ENCODE measurements at regions of chr3 and their contacts with region 1.

Region 1: GRCh38 chr3:52770496-52771333 is at the start of gene NEK4:
- DNase-seq: peak; percentile 72 to 94
- H3K4me3 ChIP-seq: peak within 1 kb of the TSS; percentile 70 to 88 (median 78)
- H3K27ac ChIP-seq: peak within 1 kb of the TSS; percentile 86
- H3K4me1 ChIP-seq: peaks cover 0 to 2% (median 0%) of the 10 kb centered on the region in 4 experiments; a peak in 1 of 7 replicates
- H3K27me3 ChIP-seq: no peaks in the 10 kb centered on the region
- CTCF ChIP-seq: no peak
- EP300 ChIP-seq: no peak
- POLR2A ChIP-seq: peak; percentile 82 to 94
- RAD21 ChIP-seq: no peak
- total RNA-seq, gene NEK4: 39.5 and 40.0 TPM in 2 replicates

Region 2: DNA sequence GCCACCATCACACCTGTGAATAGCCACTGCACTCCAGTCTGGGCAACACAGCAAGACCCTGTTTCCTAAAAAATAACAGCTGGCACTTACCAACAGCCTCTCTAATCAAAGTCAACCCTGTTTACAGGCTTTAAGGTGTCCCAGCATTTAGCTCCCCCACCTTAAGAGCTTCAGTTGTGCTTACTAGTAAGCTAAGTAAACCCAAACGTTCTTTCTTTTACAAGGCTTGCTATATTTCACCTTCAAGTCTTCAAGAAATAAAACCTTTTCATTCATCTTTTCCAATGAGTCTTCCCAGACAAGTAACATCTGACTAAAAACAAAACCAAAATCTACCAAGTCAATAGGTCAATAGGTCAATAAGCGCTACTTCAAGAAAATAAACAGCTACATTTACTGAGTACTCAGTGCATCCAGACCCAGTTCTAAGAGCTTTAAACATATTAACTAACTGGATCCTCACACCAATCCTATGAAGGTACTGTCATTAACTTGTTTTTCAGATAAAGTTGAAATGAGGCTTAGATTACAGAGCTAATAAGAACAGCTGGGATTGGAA is 147.4 kb before region 1 on chr3:
- CTCF ChIA-PET with region 1: no interaction called
- POLR2A ChIA-PET with region 1: no interaction called
- DNase-seq: no peak
- H3K4me3 ChIP-seq: no peak overlapping the region
- H3K27ac ChIP-seq: no peak overlapping the region
- H3K4me1 ChIP-seq: no peaks in the 10 kb centered on the region
- H3K27me3 ChIP-seq: no peaks in the 10 kb centered on the region
- CTCF ChIP-seq: no peak
- EP300 ChIP-seq: no peak
- POLR2A ChIP-seq: no peak
- RAD21 ChIP-seq: no peak

Region 3: DNA sequence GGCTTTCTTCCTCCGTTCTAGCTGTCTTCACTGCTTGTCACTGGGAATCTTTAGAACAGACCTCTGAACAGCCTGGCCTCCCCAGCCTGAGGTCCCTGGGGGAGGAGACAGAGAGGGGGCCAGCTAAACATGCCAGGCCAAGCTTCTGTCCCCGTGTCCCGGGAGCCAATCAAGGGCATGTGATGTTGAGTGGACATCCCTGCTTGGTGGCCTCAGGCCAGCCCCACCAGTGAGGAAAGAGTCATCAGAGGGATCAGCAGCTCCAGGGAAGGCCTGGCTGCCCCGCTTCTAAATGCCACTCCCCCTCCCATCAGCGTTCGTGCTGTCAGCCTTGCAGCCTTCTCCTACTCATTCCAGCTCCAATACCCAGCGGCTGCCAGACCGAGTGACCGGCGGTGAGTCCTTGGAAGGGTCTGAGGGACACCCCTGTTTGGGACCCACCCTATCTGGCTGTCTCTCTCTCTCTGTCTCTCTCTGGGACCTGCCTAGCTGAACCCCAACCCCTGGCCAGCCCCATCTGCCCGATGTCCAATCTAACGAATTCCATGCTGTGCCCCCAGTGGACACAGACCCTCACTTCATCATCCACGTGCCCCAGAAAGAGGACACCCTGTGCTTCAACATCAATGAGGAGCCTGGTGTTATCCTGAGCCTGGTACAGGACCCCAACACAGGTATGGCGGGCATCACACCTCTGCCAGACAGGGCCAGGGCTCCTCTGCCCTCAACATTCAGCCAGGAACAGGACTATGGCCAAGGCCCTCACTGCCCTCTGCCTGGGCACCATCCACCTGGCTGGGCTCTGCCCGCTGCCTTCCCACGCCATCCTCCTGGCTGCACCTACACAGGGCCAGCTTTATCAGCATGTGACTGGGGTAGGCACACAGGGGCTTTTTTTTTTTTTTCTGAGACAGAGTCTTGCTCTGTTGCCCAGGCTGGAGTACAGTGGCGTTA is 17.2 kb after region 1 on chr3:
- CTCF ChIA-PET with region 1: interaction called, 12 read pairs
- POLR2A ChIA-PET with region 1: interaction called, 10 read pairs
- DNase-seq: no peak
- H3K4me3 ChIP-seq: no peak overlapping the region
- H3K27ac ChIP-seq: no peak overlapping the region
- H3K4me1 ChIP-seq: no peaks in the 10 kb centered on the region
- H3K27me3 ChIP-seq: no peaks in the 10 kb centered on the region
- CTCF ChIP-seq: peak in 1 of 3 experiments; percentile 25; a peak in 1 of 4 replicates
- EP300 ChIP-seq: no peak
- POLR2A ChIP-seq: no peak
- RAD21 ChIP-seq: no peak

Region 4: GRCh38 chr3:52792961-52793695 is 22.4 kb after region 1 on chr3:
- CTCF ChIA-PET with region 1: interaction called, 28 read pairs
- POLR2A ChIA-PET with region 1: interaction called, 10 read pairs
- DNase-seq: no peak
- H3K4me3 ChIP-seq: no peak overlapping the region
- H3K27ac ChIP-seq: no peak overlapping the region
- H3K4me1 ChIP-seq: no peaks in the 10 kb centered on the region
- H3K27me3 ChIP-seq: no peaks in the 10 kb centered on the region
- CTCF ChIP-seq: no peak
- EP300 ChIP-seq: no peak
- POLR2A ChIP-seq: no peak
- RAD21 ChIP-seq: no peak

Measured in H1 (cell line).